ENCODE measurements at regions of chr14 and their contacts with region 1.

Region 1: DNA sequence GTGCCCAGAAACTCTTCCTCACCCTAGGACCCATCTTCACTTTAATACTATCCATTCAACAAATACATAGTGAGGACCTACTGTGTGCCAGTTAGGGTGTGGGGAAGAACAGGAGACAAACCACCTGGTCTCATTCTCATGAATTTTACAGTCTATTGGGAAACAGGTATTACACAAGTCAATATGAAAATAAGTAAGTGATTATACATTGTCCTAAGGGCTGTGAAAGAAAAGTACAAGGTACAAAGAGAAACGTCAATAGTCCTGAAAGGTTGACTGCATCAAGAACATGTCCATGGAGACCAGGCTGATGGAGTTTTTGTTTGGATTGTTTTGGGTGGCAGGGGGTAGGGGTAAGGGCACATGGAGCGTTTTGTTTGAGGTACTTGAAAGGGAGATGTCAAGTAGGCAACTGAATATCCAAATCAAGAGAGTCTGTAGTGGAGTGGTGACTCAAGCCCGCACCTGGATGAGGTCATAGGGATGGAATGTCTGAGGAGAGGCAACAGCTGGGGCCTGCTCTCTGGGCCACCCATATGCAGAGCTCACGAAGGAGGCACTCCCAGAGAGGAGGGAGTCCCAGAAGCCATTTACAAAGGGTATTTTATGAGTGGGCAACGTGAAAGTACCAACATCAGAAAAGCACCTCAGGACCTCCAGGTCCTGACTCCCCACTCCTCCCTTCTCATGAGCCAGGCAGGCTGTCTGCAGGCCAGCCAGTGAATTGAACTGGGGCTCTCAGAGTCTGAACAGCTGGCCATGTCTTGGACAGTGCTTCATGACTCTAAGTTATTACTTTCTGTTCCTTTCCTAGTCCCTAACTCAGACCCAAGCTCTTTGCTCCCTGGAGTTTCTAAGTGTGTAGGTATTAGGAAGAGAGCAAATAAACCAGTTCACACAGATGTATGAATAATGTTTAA is 272.0 kb downstream of the ZFP36L1 start:
- DNase-seq: no peak
- H3K4me3 ChIP-seq: no peak overlapping the region
- H3K27ac ChIP-seq: peak overlapping the region; percentile 74 to 75
- H3K4me1 ChIP-seq: peaks cover 49% of the 10 kb centered on the region
- H3K27me3 ChIP-seq: no peaks in the 10 kb centered on the region
- CTCF ChIP-seq: no peak
- EP300 ChIP-seq: no peak
- POLR2A ChIP-seq: no peak

Region 2: GRCh38 chr14:68297876-68298469 is 222.9 kb before region 1 on chr14:
- intact Hi-C with region 1: loop called in 1 of 4 experiments (anchors 10 kb)
- DNase-seq: no peak
- H3K4me3 ChIP-seq: no peak overlapping the region
- H3K27ac ChIP-seq: peak overlapping the region in 1 of 2 donors; percentile 62
- H3K4me1 ChIP-seq: peaks cover 27% of the 10 kb centered on the region
- H3K27me3 ChIP-seq: no peaks in the 10 kb centered on the region
- CTCF ChIP-seq: peak in 1 of 3 donors; percentile 24
- EP300 ChIP-seq: no peak
- POLR2A ChIP-seq: no peak

Region 3: DNA sequence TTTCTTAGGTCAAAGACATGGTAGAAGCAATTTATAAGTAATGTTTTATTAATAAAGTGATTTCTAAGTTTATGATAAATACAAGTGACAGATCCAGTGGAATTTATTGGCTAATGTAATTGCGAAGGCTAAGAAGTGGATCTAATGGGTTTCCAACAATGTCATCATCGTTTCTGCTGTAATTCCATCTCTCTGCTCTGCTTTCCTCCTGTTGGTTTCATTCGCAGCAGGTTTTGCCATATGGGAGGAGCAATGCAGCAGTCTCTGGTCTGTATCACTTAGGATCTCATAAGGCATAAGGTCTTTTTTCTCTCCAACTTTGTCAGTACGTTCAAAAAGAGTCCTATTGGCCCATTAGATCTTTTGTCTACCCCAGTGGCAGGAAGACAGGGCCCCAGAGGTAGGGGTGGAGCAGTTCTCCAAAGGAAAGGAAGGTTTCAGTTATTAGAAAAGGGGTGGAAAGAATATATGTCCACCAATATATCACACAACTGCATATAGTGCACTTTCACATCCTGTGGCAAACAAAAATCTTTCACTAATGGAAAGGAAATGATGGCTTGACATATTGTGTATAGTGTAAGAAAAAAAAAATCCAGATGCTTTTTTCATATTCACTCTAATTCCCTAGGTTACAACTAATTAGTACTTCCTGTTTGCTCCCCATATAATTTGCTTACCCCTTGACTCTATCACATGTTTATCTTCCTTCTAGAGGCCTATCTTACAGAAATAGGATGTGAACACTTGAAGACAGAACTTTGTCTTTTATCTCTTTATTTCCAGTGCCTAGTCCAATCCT is 179.3 kb before region 1 on chr14:
- intact Hi-C with region 1: no loop called
- DNase-seq: no peak
- H3K4me3 ChIP-seq: no peak overlapping the region
- H3K27ac ChIP-seq: no peak overlapping the region
- H3K4me1 ChIP-seq: no peaks in the 10 kb centered on the region
- H3K27me3 ChIP-seq: no peaks in the 10 kb centered on the region
- CTCF ChIP-seq: no peak
- EP300 ChIP-seq: no peak
- POLR2A ChIP-seq: no peak

Measured in ovary (tissue), 10 donors.